ENCODE measurements at regions of chr9 and their contacts with region 1.

Region 1: GRCh38 chr9:26744191-26744965 is 148.2 kb downstream of the CAAP1 start:
- DNase-seq: no peak
- ATAC-seq: no peak
- H3K4me3 Mint-ChIP-seq: no peak overlapping the region
- H3K27ac Mint-ChIP-seq: no peak overlapping the region
- H3K4me1 Mint-ChIP-seq: peaks cover 2% of the 10 kb centered on the region
- H3K27me3 Mint-ChIP-seq: peaks cover 8% of the 10 kb centered on the region
- CTCF ChIP-seq: peak; percentile 94

Region 2: GRCh38 chr9:26975693-26976059 is 231.3 kb after region 1 on chr9:
- CTCF ChIA-PET with region 1: interaction called, 3 read pairs
- POLR2A ChIA-PET with region 1: no interaction called
- intact Hi-C with region 1: loop called (anchors 2 kb)
- DNase-seq: peak; percentile 6
- ATAC-seq: peak; percentile 42
- H3K4me3 Mint-ChIP-seq: no peak overlapping the region
- H3K27ac Mint-ChIP-seq: no peak overlapping the region
- H3K4me1 Mint-ChIP-seq: no peaks in the 10 kb centered on the region
- H3K27me3 Mint-ChIP-seq: no peaks in the 10 kb centered on the region
- CTCF ChIP-seq: peak; percentile 53

Region 3: GRCh38 chr9:27276193-27277030 is 532.0 kb after region 1 on chr9:
- CTCF ChIA-PET with region 1: no interaction called
- POLR2A ChIA-PET with region 1: no interaction called
- intact Hi-C with region 1: loop called (anchors 10 kb)
- DNase-seq: no peak
- ATAC-seq: no peak
- H3K4me3 Mint-ChIP-seq: no peak overlapping the region
- H3K27ac Mint-ChIP-seq: no peak overlapping the region
- H3K4me1 Mint-ChIP-seq: peaks cover 2% of the 10 kb centered on the region
- H3K27me3 Mint-ChIP-seq: peaks cover 9% of the 10 kb centered on the region
- CTCF ChIP-seq: peak; percentile 92

Measured in activated CD8-positive, alpha-beta T cell treated with anti-CD3 and anti-CD28 coated beads for 36 hours (primary cell).